Gastrocnemius medialis (tissue), 4 donors: ENCODE measurements at regions of chr4 and their contacts with region 1.

Region 1: DNA sequence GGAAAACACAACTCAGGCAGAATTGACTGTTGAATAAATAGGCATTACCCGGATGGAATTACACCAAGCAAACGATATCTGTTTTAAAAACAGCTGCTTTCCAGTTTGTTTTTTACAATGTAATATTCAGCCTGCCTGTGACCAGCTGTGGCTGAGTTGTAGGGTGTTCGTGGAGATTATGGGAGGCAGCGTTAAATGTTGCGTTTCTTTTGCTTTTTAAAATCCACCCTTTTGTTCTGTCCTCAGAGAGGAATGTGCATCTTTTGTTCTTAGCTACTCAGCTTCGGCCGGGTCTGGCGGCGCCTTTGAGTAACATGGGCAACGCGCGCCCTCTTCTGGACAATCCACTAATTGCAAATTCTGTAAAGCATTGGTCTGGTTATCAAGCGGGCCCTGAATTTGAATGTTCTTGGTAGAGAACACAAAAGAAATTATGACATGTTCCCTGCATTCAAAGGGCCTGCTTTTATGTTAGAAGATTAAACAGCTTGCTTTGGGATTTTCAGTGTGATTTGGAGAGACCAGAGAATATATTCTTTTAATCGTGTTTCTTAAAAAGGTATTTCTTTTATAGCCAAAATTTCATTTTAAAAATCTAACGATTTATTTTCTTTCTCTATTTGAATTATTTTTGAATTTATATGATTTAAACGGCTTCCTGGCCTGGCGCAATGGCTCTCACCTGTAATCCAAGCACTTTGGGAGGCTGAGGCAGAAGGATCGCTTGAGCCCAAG is 76.3 kb upstream of the TRIM2 start:
- DNase-seq: peak; percentile 50 to 52
- ATAC-seq: peak; percentile 83 to 87
- H3K4me3 ChIP-seq: no peak overlapping the region
- H3K27ac ChIP-seq: no peak overlapping the region
- H3K4me1 ChIP-seq: peaks cover 2 to 4% of the 10 kb centered on the region in 2 donors
- H3K27me3 ChIP-seq: no peaks in the 10 kb centered on the region
- CTCF ChIP-seq: peak; percentile 68 to 86 (median 73)
- POLR2A ChIP-seq: no peak

Region 2: DNA sequence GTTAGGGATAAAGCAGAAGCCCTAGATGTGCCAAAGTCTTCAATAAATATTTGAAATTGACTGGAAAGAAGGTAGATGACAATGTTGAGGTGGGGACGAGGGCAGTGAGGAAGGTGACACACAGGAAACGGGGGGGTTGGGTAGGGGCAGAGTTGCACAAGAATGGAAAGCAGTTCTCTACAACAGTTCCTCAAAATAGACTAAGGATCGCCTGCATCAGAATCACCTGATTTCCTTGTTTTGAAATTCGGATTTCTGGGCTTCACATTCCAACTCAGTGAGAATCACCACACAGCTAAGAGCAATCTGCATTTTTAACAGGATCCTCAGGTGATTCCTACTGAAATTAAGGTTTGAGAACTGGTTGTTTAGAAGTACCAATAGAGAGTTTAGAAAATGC is 277.6 kb before region 1 on chr4:
- in situ Hi-C with region 1: loop called in 1 of 4 experiments (anchors 5 kb)
- intact Hi-C with region 1: loop called (anchors 1 kb)
- DNase-seq: peak; percentile 51 to 72
- ATAC-seq: peak; percentile 94 to 99
- H3K4me3 ChIP-seq: peak overlapping the region in 2 of 4 donors; percentile 18 to 24
- H3K27ac ChIP-seq: peak overlapping the region in 3 of 4 donors; percentile 65 to 67 (median 67)
- H3K4me1 ChIP-seq: peaks cover 10 to 11% of the 10 kb centered on the region in 2 donors
- H3K27me3 ChIP-seq: no peaks in the 10 kb centered on the region
- CTCF ChIP-seq: no peak
- POLR2A ChIP-seq: no peak

Region 3: DNA sequence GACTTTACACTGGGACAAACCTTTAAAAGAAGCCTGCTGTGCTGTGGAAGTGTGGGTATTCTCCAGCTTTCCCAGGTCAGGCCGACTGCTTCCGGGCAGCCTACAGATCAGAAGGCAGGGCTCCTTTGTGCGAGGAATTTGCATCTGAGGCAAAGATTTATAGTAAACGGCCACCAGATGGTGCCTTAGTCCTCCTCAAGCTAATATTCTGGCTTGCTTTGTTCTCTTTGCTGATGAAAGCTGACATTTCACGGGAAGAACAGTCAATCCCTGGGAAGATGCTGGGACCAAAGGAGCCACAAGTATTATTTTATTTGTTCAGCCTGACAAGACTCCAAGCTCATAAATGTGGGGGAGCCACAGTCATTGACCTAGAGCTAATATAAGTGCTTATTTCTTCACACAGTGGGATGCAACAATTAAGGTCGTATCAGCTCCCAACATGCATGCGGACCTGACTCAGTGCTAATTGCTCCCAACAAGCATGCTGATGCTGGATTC is 44.4 kb before region 1 on chr4:
- in situ Hi-C with region 1: no loop called
- intact Hi-C with region 1: loop called (anchors 1 kb)
- DNase-seq: no peak
- ATAC-seq: peak; percentile 67 to 68
- H3K4me3 ChIP-seq: no peak overlapping the region
- H3K27ac ChIP-seq: no peak overlapping the region
- H3K4me1 ChIP-seq: peaks cover 2 to 4% of the 10 kb centered on the region in 2 donors
- H3K27me3 ChIP-seq: no peaks in the 10 kb centered on the region
- CTCF ChIP-seq: peak in 4 of 5 experiments; percentile 30 to 55 (median 48)
- POLR2A ChIP-seq: no peak

Region 4: DNA sequence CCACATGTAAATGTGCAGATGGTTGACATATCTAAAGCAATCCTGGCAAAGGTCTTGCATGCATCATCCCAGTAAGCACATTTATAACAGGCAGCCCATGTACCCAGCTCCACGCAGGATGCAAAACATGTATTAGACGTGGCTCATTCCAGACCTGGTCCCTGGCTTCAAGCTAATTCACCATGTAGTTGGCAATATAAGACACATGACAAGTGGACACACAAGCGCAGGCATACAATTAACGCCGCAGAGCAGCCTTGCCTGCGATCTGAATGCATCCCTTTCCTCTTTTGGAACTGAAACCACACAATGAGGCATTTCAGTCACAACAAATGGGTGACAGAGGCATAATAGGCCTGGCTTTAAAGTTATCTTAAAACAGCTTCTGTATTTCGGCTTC is 38.2 kb before region 1 on chr4:
- in situ Hi-C with region 1: loop called in 1 of 4 experiments (anchors 5 kb)
- intact Hi-C with region 1: no loop called
- DNase-seq: no peak
- ATAC-seq: no peak
- H3K4me3 ChIP-seq: no peak overlapping the region
- H3K27ac ChIP-seq: no peak overlapping the region
- H3K4me1 ChIP-seq: peaks cover 2 to 3% of the 10 kb centered on the region in 2 donors
- H3K27me3 ChIP-seq: no peaks in the 10 kb centered on the region
- CTCF ChIP-seq: no peak
- POLR2A ChIP-seq: no peak

Region 5: GRCh38 chr4:153249199-153250041 is 121.5 kb after region 1 on chr4:
- in situ Hi-C with region 1: no loop called
- intact Hi-C with region 1: no loop called
- DNase-seq: peak in 1 of 2 donors; percentile 18
- ATAC-seq: peak; percentile 79 to 83
- H3K4me3 ChIP-seq: peak overlapping the region; percentile 47 to 76 (median 66)
- H3K27ac ChIP-seq: peak overlapping the region in 3 of 4 donors; percentile 5 to 44 (median 34)
- H3K4me1 ChIP-seq: peaks cover 6 to 8% of the 10 kb centered on the region in 2 donors
- H3K27me3 ChIP-seq: no peaks in the 10 kb centered on the region
- CTCF ChIP-seq: no peak
- POLR2A ChIP-seq: no peak

Region 6: DNA sequence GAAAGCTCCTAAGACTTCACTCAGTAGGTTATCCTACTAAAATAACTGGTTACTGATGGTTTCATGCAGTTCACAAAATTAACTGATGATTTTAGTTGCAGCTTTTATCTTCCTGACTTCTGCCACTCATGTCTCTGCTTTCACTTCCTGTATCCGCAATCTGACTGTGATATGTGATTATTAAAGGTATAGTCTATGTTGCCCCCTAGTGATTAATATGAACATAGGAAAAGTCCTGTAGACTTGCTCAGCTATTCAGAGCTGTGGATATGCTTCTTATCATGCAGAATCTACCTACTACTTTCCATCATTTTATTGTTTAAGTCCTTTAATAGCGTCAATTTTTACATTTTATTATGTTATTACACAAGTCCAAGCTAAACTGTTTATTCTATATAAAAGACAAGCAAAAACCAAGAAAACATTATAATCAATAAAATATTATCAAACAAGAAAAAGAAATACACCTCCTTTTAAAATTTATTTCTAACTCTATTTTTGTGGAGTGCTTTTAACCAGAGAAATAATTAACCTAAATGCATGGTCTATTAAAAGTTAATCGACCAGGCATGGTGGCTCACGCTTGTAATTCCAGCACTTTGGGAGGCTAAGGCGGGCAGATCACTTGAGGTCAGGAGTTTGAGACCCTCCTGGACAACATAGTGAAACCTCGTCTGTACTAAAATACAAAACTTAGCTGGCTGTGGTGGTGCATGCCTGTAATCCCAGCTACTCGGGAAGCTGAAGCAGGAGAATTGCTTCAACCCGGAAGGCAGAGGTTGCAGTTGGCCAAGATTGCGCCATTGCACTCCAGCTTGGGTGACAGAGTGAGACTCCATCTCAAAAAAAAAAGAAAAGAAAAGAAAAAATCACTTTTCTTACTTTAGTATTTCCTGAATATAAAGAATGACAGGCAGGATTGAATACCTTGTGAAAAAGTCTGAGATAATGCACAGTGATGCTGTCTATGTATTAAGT is 515.8 kb after region 1 on chr4:
- in situ Hi-C with region 1: loop called in 1 of 4 experiments (anchors 25 kb)
- intact Hi-C with region 1: no loop called
- DNase-seq: no peak
- ATAC-seq: peak in 1 of 2 donors; percentile 68
- H3K4me3 ChIP-seq: no peak overlapping the region
- H3K27ac ChIP-seq: no peak overlapping the region
- H3K4me1 ChIP-seq: no peaks in the 10 kb centered on the region
- H3K27me3 ChIP-seq: no peaks in the 10 kb centered on the region
- CTCF ChIP-seq: peak in 3 of 5 experiments; percentile 22 to 46 (median 35)
- POLR2A ChIP-seq: no peak